PC-3 (cell line): ENCODE measurements at regions of chr3 and their contacts with region 1.

Region 1: DNA sequence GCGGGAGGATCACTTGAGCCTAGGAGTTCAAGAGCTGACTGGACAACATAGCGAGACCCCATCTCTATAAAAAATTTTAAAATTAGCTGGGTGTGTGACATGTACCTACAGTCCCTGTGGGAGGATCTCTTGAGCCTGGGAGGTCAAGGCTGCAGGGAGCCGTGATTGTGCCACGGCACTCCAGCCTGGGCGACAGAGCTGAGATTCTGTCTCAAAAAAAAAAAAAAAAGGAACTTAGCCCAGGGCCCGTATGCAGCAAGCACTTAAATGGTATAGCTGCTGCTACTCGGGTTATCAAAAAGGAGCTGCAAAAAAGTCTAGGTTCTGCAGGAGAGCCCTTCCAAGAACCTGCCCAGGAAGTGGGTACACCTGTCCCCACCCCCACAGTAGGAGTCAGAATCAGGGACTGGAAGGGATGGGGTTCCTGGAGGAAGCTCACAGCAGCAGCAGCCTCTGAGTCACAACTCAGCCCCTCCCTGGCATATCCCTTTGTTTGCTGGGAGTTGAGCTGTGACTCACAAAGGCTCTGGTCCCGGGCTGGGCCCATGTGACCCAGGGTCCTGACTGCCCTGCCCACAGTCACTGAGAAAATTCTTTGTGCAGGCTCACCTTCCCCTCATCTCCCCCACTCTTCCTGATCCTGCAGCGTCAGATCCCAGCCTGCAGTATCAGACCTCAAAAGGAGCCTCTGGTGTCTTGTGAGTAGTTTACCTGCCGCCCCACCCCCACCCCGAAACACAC is at the start of gene SPATA12:
- DNase-seq: peak; percentile 98
- ATAC-seq: peak; percentile 94
- H3K4me3 ChIP-seq: peak within 1 kb of the TSS; percentile 51
- H3K27ac ChIP-seq: peak within 1 kb of the TSS; percentile 90
- H3K4me1 ChIP-seq: peaks cover 43% of the 10 kb centered on the region
- H3K27me3 ChIP-seq: no peaks in the 10 kb centered on the region
- CTCF ChIP-seq: no peak
- total RNA-seq, gene SPATA12: 0.12 and 0.47 TPM in 2 replicates

Region 2: DNA sequence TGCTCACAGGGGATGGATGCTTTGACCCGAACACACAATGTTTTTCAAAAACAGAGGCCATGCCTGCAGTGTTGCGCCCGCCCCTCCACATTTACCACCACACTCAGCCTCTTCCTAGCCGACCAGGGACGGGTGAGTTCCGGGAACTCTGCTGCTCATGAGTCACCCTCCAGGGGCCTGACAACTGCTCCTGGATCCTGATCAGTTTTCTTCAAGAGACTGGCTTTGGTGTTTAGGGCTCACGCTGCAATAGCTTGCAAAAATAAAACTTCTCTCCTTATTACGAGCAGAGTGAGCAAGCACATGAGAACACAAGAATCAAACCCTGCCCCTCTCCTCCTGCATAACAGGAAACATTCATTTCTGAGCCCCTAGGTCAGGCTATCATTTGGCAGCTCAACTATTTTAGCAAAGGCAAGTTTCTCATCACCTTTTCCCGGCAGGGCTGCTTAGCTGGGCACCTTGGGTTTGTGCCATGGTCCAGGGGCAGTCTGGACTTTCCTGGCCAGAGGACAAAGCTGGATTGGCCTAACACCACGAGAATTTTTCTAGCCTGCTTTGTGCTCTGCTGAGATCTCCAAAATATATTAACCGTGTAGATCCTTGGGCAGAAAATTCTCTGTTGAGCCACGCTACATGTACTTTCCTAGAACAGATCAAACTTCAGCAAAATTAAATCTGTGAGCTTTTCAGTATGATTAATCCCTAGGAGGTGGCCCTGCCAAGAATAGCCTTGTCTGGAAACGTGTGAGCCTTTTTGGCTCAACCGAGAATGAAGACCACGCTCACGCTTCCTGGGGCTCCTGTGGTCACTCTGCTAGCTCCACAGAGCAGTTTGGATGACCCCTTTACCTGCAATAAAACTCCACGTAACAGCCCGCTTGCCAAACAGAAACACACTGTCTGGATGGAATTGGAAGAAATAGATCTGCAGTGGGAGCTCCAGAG is 52.5 kb before region 1 on chr3:
- CTCF ChIA-PET with region 1: no interaction called
- POLR2A ChIA-PET with region 1: no interaction called
- intact Hi-C with region 1: loop called (anchors 1 kb)
- DNase-seq: peak; percentile 83
- ATAC-seq: peak; percentile 92
- H3K4me3 ChIP-seq: peak overlapping the region; percentile 45; the same call in 1 of the 2 replicates
- H3K27ac ChIP-seq: peak overlapping the region; percentile 90
- H3K4me1 ChIP-seq: peaks cover 30% of the 10 kb centered on the region
- H3K27me3 ChIP-seq: no peaks in the 10 kb centered on the region
- CTCF ChIP-seq: no peak

Region 3: GRCh38 chr3:57031631-57032541 is 28.4 kb before region 1 on chr3:
- CTCF ChIA-PET with region 1: no interaction called
- POLR2A ChIA-PET with region 1: no interaction called
- intact Hi-C with region 1: loop called (anchors 2 kb)
- DNase-seq: no peak
- ATAC-seq: peak; percentile 75
- H3K4me3 ChIP-seq: no peak overlapping the region
- H3K27ac ChIP-seq: no peak overlapping the region
- H3K4me1 ChIP-seq: no peaks in the 10 kb centered on the region
- H3K27me3 ChIP-seq: no peaks in the 10 kb centered on the region
- CTCF ChIP-seq: no peak

Region 4: DNA sequence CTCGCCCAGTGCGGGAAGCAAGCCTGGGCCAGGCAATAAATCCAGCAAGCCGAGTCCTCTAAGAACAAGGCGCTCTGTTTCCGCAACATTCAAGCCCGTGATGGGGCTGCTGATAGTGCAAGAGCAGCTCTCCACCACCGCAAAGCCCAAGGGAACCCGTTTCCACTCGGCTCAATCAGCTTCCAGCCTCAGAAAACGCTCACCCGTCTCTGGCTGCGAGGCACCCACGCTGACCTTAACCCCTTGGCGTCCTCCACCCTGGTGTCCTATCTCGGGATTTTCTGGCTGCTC is 18.0 kb after region 1 on chr3:
- CTCF ChIA-PET with region 1: no interaction called
- POLR2A ChIA-PET with region 1: no interaction called
- intact Hi-C with region 1: loop called (anchors 2 kb)
- DNase-seq: peak; percentile 47
- ATAC-seq: peak; percentile 43
- H3K4me3 ChIP-seq: peak overlapping the region; percentile 99
- H3K27ac ChIP-seq: no peak overlapping the region
- H3K4me1 ChIP-seq: peaks cover 6% of the 10 kb centered on the region
- H3K27me3 ChIP-seq: no peaks in the 10 kb centered on the region
- CTCF ChIP-seq: no peak

Region 5: GRCh38 chr3:57331078-57331610 is 270.9 kb after region 1 on chr3:
- CTCF ChIA-PET with region 1: no interaction called
- POLR2A ChIA-PET with region 1: no interaction called
- intact Hi-C with region 1: no loop called
- DNase-seq: no peak
- ATAC-seq: 0 out of 2 replicates have a peak, but pooled peaks have one; percentile 45
- H3K4me3 ChIP-seq: no peak overlapping the region
- H3K27ac ChIP-seq: no peak overlapping the region
- H3K4me1 ChIP-seq: no peaks in the 10 kb centered on the region
- H3K27me3 ChIP-seq: peaks cover 14% of the 10 kb centered on the region; the same call in 1 of the 2 replicates
- CTCF ChIP-seq: peak; percentile 33; the same call in 1 of the 2 replicates

Region 6: DNA sequence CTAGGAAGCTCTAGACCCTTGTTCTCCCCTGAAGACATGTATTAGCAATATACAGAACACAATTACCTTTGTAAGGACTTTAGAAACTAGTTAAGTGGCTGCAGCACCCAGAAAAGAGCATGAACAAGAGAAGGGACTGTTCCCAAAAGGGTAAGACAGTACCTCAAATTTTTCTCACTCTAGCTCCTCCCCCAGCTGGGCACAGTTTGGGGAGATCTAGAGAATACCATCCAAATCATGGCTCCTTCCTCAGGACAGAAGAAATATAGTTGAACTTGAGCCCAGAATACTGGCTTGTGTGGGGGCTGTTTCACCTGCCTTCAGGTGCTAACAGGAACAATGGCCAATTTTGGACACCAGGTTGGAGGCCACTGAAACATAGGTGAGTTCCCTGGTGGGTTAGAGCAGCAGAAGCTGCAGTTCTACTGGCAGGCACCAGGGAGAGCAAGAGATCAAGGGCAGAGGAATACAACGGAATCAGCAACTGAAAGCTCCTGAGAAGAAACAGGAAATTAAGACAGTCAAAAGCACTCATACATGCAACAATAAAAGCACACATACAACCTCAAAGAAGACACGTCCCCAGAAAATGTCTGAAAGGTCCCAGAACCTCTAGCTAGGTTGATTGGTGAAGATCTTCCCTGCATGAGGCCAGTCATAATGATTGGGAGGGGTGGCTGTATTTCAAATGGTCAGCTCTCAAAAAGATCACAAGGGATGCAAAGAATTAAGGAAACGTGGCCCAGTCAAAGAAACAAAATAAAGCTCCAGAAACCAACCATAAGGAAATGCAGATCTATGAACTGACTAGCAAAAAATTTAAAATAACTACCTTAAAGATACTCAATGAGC is 337.1 kb after region 1 on chr3:
- CTCF ChIA-PET with region 1: no interaction called
- POLR2A ChIA-PET with region 1: interaction called, 20 read pairs
- intact Hi-C with region 1: no loop called
- DNase-seq: peak; percentile 78
- ATAC-seq: peak; percentile 99
- H3K4me3 ChIP-seq: no peak overlapping the region
- H3K27ac ChIP-seq: no peak overlapping the region
- H3K4me1 ChIP-seq: no peaks in the 10 kb centered on the region
- H3K27me3 ChIP-seq: no peaks in the 10 kb centered on the region
- CTCF ChIP-seq: peak; percentile 95

Region 7: DNA sequence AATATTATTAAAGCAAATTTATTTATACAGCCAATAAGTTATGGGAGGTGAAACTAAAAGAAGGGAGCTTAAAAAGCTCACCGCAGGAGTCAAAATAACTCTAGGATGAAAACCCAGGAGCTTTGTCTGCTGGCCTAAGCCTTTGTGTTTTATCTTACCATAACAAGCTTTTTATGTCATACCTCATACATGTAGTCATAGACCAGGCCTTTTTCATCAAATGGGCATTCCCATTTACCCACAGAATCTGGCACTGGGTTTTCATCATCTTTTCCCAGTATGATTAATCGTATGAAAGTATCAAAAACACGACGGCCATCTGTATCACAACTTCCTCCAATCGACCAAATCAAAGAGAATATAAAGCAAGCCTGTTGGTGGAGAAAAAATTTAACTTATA is 361.1 kb after region 1 on chr3:
- CTCF ChIA-PET with region 1: no interaction called
- POLR2A ChIA-PET with region 1: no interaction called
- intact Hi-C with region 1: no loop called
- DNase-seq: no peak
- ATAC-seq: no peak
- H3K4me3 ChIP-seq: no peak overlapping the region
- H3K27ac ChIP-seq: no peak overlapping the region
- H3K4me1 ChIP-seq: no peaks in the 10 kb centered on the region
- H3K27me3 ChIP-seq: 0 out of 2 replicates have a peak, but pooled peaks cover 3% of the 10 kb centered on the region
- CTCF ChIP-seq: no peak